ENCODE measurements at regions of chr6 and their contacts with region 1.

Region 1: GRCh38 chr6:8131256-8131897 is 29.0 kb upstream of the EEF1E1 start:
- DNase-seq: no peak
- H3K4me3 ChIP-seq: no peak overlapping the region
- CTCF ChIP-seq: peak; percentile 64

Region 2: DNA sequence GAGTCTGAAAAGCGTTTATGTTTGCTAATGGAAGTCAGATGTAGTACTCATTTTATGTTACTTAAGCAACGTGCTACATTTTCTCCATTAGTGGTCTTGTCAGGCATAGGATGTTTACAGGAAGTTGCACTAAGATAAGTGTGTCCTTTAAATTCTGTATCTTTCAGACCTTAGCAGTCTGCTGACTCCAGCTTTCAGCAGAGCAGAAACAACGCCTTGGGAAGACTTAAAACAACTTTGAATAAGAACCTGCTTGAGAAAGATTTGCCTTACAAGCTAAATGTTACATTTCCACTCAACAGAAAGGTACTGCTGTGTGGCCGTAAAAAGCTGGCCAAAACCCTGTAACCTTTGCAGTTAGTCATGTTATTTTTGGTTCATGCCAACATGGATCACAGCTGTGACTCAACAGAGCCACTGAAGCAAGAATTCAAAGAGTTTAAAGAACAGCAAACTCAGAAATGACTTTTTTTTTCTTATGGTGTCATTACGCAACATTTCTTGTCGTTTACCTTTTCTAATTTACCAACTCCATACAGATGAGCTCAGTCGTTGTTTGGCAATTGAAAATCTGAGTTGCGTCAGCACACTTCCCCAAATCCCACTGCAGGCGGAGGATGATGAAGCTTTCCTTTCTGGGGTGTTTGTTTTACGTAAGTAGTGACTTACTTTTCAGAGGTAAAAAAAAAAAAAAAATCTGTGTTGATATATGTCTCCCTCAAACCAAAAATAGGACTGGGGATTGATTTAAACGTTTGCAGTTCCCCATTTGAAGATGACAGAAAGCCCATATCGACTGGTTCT is 433.4 kb before region 1 on chr6:
- CTCF ChIA-PET with region 1: no interaction called
- POLR2A ChIA-PET with region 1: no interaction called
- DNase-seq: peak; percentile 61
- H3K4me3 ChIP-seq: peak overlapping the region; percentile 26
- CTCF ChIP-seq: no peak

Region 3: GRCh38 chr6:8113131-8113654 is 18.2 kb before region 1 on chr6:
- CTCF ChIA-PET with region 1: interaction called, 17 read pairs
- POLR2A ChIA-PET with region 1: no interaction called
- DNase-seq: peak; percentile 23
- H3K4me3 ChIP-seq: no peak overlapping the region
- CTCF ChIP-seq: no peak

Region 4: GRCh38 chr6:8143945-8144344 is 12.6 kb after region 1 on chr6:
- CTCF ChIA-PET with region 1: interaction called, 47 read pairs
- POLR2A ChIA-PET with region 1: no interaction called
- DNase-seq: no peak
- H3K4me3 ChIP-seq: no peak overlapping the region
- CTCF ChIP-seq: no peak

Region 5: GRCh38 chr6:8195040-8195713 is 63.8 kb after region 1 on chr6:
- CTCF ChIA-PET with region 1: interaction called, 25 read pairs
- POLR2A ChIA-PET with region 1: no interaction called
- DNase-seq: no peak
- H3K4me3 ChIP-seq: no peak overlapping the region
- CTCF ChIP-seq: no peak

Region 6: GRCh38 chr6:8229915-8230756 is 98.8 kb after region 1 on chr6:
- CTCF ChIA-PET with region 1: interaction called, 768 read pairs
- POLR2A ChIA-PET with region 1: no interaction called
- DNase-seq: no peak
- H3K4me3 ChIP-seq: no peak overlapping the region
- CTCF ChIP-seq: no peak

Region 7: DNA sequence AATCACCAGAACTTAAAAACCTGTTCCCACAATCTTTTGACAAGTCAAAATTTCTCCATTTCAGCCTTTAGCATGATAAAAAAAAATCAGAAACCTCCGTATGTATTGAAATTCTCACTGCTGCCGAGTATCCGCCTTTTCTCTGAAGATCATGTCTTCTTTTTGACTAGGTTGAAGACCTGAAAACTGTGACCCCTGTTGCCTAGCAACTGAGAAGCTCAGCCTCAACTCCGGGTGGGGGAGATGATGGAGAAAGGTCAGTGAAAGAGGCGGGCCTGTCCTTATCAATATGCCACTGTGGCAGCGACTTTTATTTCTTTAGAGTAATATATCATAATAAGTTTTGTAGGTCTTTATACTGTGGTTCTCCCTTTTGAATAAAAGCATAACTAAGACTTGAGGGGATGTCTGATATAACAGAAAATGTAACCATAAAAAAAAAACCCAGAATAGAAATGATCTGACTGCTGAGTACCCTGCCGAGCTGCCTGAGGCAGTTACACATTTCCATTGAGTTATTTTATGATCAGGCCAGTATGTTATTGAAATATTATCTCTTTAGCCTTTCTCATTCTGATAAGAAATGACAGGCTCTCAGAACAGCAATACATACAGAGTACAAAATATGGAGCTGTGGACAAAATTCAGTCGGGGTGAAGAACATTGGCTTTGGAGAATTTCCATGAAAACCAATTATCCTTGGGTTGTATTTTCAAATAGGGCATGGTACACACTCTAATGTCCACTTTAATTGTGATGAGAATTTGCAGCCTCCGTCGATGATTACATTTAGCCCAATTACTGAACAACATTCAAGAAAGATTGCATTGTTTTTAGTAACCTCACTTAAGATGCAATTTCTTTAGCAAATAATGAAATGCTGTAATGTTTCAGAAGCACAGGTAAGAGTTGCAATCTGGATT is 107.6 kb after region 1 on chr6:
- CTCF ChIA-PET with region 1: interaction called, 10 read pairs
- POLR2A ChIA-PET with region 1: no interaction called
- DNase-seq: no peak
- H3K4me3 ChIP-seq: no peak overlapping the region
- CTCF ChIP-seq: no peak